T-cell (primary cell): ENCODE measurements at regions of chr6 and their contacts with region 1.

Region 1: GRCh38 chr6:36027501-36028087 is at the start of gene MAPK14:
- DNase-seq: peak; percentile 96 to 100 (median 98)
- ATAC-seq: peak; percentile 88 to 91 (median 88)
- H3K4me3 ChIP-seq: peak within 1 kb of the TSS; percentile 96 to 98
- H3K4me3 Mint-ChIP-seq: peak within 1 kb of the TSS; percentile 88 to 94 (median 90)
- H3K27ac ChIP-seq: peak within 1 kb of the TSS; percentile 75
- H3K27ac Mint-ChIP-seq: peak within 1 kb of the TSS; percentile 92 to 93
- H3K4me1 ChIP-seq: peaks cover 12 to 28% of the 10 kb centered on the region in 2 experiments
- H3K4me1 Mint-ChIP-seq: peaks cover 34 to 39% (median 39%) of the 10 kb centered on the region in 3 donors
- H3K27me3 ChIP-seq: peaks cover 0 to 15% of the 10 kb centered on the region in 2 experiments
- H3K27me3 Mint-ChIP-seq: peaks cover 20 to 23% of the 10 kb centered on the region in 2 donors
- total RNA-seq, gene MAPK14: 49.3 to 64.5 (median 60.3) TPM

Region 2: DNA sequence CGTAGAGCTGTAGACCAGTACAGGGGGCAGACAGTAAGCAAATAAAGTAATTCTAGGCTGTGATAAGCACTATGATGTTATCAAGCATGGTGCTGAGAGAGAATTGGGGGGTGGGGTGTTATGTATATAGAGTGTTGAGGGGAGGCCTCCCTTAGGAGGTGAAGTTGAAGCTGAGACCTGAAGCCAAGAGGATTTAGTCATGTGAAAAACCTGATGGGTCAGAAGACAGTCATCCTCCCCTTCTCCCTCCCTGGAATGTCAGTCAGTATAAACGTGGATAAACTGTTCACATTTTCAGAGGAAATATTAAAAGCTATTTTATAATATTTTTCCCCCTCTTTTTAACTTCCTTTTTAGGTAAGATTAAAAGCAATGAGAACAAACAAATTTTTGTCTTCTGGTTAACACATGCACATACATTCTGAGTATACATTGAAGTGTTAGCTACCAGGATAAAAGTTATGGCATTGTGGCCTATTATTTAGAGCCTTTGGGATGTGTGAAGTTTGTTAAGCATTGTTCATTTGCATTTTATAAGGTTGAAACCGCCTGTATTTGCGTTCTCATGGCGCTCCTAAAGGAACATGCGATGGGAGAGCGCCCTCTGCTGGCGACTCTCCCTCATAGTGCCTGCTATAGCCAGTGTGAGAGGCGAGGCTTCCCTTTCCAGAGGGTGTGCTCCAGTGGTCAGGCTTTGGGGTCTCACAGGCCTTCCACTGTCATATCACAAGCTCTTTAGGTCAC is 67.3 kb after region 1 on chr6:
- CTCF ChIA-PET with region 1: interaction called, 13 to 65 read pairs
- POLR2A ChIA-PET with region 1: interaction called in 1 of 2 experiments, 12 read pairs
- DNase-seq: peak; percentile 48 to 92 (median 76)
- ATAC-seq: peak; percentile 73 to 85 (median 78)
- H3K4me3 ChIP-seq: no peak overlapping the region
- H3K4me3 Mint-ChIP-seq: no peak overlapping the region
- H3K27ac ChIP-seq: peak overlapping the region; percentile 7
- H3K27ac Mint-ChIP-seq: peak overlapping the region; percentile 69 to 80
- H3K4me1 ChIP-seq: peaks cover 19 to 20% of the 10 kb centered on the region in 2 experiments
- H3K4me1 Mint-ChIP-seq: peaks cover 31 to 39% (median 33%) of the 10 kb centered on the region in 3 donors
- H3K27me3 ChIP-seq: no peaks in the 10 kb centered on the region
- H3K27me3 Mint-ChIP-seq: no peaks in the 10 kb centered on the region

Region 3: DNA sequence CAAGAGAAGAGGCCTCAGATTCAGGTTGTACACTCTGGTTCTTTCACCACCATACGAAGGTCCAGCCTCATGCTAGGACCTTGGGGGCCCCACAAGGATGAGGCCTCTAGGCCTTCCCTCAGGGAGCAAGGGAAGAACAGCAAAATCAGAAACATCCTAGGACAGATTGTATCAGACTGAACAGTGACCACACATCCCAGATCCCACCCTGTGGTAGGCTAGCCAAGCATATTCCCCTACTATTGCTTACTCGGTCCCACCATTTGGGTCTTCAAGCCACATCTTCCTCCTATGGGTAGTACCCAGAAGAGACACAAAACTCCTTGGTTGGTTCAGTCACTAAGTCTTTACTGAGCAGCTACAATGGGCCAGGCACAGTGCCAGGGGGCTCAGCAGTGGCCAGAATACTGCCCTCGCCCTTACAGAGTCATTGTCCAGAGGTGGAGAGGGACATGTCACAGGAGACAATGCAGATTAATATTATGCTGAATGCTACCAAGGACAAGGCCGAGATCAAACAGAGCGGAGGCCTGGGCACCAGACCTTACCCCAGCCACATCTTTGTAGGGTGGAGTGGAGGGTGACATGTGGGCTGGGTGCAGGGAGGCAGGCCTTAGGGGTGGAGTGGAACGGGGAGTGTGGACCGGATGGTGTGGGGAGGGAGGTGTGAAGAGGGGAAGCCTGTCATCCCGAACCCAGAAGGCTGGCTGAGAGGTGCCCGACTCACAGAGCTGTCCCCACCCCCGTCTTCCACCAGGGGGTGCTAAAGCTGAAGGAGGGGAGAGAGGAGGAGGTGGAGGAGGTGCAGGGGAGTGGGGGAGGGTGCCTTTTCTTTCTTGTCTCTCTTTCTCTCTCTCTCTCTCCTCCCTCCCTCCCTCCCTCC is 95.9 kb after region 1 on chr6:
- CTCF ChIA-PET with region 1: interaction called in 1 of 2 experiments, 10 read pairs
- POLR2A ChIA-PET with region 1: interaction called in 1 of 2 experiments, 7 read pairs
- DNase-seq: peak; percentile 81 to 94 (median 88)
- ATAC-seq: peak; percentile 71 to 81 (median 74)
- H3K4me3 ChIP-seq: no peak overlapping the region
- H3K4me3 Mint-ChIP-seq: peak overlapping the region in 1 of 3 donors; percentile 82
- H3K27ac ChIP-seq: peak overlapping the region; percentile 75
- H3K27ac Mint-ChIP-seq: peak overlapping the region; percentile 96 to 98
- H3K4me1 ChIP-seq: peaks cover 41 to 90% of the 10 kb centered on the region in 2 experiments
- H3K4me1 Mint-ChIP-seq: peaks cover 79 to 93% (median 85%) of the 10 kb centered on the region in 3 donors
- H3K27me3 ChIP-seq: no peaks in the 10 kb centered on the region
- H3K27me3 Mint-ChIP-seq: no peaks in the 10 kb centered on the region

Region 4: GRCh38 chr6:36131511-36132245 is 104.1 kb after region 1 on chr6:
- CTCF ChIA-PET with region 1: interaction called in 1 of 2 experiments, 12 read pairs
- POLR2A ChIA-PET with region 1: no interaction called
- DNase-seq: peak in 16 of 35 experiments; percentile 10 to 70 (median 30)
- ATAC-seq: peak; percentile 74 to 76 (median 76)
- H3K4me3 ChIP-seq: peak overlapping the region in 1 of 2 donors; percentile 62
- H3K4me3 Mint-ChIP-seq: peak overlapping the region; percentile 81 to 89 (median 83)
- H3K27ac ChIP-seq: peak overlapping the region; percentile 79
- H3K27ac Mint-ChIP-seq: peak overlapping the region; percentile 94
- H3K4me1 ChIP-seq: peaks cover 6 to 53% of the 10 kb centered on the region in 2 experiments
- H3K4me1 Mint-ChIP-seq: peaks cover 45 to 64% (median 52%) of the 10 kb centered on the region in 3 donors
- H3K27me3 ChIP-seq: no peaks in the 10 kb centered on the region
- H3K27me3 Mint-ChIP-seq: no peaks in the 10 kb centered on the region